ENCODE measurements at regions of chr15 and their contacts with region 1.

Region 1: DNA sequence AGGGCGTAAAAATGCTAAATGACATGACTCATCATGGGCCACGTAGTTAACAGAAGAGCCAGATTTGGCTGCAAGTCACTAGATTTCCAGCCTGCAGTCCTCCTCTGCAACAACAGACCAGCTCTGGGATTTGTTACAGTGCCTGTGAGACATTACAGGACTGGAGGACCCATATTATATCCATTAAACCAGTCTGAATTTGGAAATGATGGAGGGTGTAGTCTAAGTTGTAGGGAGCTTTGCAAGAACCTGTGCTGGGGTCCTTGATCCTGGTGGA is 10.8 kb downstream of the ZNF774 start:
- DNase-seq: peak; percentile 67
- H3K4me3 Mint-ChIP-seq: peak overlapping the region; percentile 57
- H3K27ac Mint-ChIP-seq: peak overlapping the region; percentile 90
- H3K4me1 Mint-ChIP-seq: peaks cover 38% of the 10 kb centered on the region
- H3K27me3 Mint-ChIP-seq: no peaks in the 10 kb centered on the region
- CTCF ChIP-seq: no peak

Region 2: DNA sequence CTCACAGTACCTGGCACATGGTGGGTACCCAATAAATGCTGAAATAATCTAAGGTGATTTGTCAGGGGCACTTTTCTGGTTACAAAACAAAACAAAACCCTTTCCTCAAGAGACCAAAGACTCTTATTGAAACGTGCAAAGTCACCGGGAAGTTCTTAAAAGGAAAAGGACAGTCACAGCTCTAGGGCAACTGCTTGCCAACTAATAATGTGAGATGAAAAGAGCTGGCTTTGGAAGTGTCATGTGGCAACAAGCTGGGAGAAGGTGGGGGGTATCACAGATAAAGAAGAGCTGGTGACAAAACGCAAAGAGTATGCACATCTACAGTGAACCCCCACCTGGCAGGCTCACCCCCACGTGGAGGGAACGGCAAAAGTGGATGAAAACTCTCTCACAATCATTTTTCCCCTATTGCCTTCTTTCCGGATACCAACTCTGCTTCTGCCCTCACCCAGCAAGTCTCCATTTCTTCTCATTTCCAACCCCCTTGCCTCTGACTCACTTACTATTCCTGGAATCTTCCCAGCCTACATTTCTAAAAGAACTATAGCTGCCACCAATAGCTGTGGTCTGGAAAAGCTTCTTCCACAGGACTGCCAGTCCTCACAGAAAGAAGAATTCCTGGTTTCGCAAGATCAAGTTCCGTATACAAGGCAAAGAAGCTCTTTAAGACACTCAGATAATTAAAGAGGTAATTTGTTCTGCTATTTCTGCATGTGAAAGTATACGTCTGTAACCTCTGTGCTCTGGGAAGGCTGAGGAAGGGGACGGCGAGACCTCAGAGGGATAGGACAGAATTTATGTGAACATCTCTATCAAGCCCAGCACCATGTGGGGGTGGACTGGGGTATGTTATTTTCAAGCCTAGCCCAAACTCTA is 526.4 kb before region 1 on chr15:
- CTCF ChIA-PET with region 1: no interaction called
- POLR2A ChIA-PET with region 1: no interaction called
- intact Hi-C with region 1: no loop called
- DNase-seq: peak; percentile 94
- H3K4me3 Mint-ChIP-seq: peak overlapping the region; percentile 63
- H3K27ac Mint-ChIP-seq: peak overlapping the region; percentile 98
- H3K4me1 Mint-ChIP-seq: peaks cover 35% of the 10 kb centered on the region
- H3K27me3 Mint-ChIP-seq: no peaks in the 10 kb centered on the region
- CTCF ChIP-seq: no peak

Region 3: DNA sequence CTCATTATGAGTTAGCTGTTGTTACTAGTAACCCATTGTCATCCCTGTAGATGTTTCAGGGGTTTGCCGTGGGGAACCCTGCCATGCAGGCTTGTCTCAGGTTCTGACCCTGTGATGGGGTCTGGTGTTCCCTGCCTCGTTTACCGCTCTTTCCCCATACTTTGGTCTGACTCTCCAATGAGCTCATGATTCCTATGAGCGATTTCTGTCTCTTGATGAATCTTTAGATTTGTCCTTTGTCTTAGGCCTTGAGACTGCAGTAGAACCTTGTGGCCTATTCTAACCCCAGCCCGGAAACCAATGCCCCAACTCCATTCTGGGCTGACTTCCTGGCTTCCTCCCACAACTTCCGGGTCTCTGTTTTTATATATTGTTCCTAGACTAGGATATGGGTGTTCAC is 13.9 kb after region 1 on chr15:
- CTCF ChIA-PET with region 1: interaction called, 3 read pairs
- POLR2A ChIA-PET with region 1: interaction called, 11 read pairs
- intact Hi-C with region 1: no loop called
- DNase-seq: no peak
- H3K4me3 Mint-ChIP-seq: no peak overlapping the region
- H3K27ac Mint-ChIP-seq: no peak overlapping the region
- H3K4me1 Mint-ChIP-seq: no peaks in the 10 kb centered on the region
- H3K27me3 Mint-ChIP-seq: no peaks in the 10 kb centered on the region
- CTCF ChIP-seq: no peak

Region 4: DNA sequence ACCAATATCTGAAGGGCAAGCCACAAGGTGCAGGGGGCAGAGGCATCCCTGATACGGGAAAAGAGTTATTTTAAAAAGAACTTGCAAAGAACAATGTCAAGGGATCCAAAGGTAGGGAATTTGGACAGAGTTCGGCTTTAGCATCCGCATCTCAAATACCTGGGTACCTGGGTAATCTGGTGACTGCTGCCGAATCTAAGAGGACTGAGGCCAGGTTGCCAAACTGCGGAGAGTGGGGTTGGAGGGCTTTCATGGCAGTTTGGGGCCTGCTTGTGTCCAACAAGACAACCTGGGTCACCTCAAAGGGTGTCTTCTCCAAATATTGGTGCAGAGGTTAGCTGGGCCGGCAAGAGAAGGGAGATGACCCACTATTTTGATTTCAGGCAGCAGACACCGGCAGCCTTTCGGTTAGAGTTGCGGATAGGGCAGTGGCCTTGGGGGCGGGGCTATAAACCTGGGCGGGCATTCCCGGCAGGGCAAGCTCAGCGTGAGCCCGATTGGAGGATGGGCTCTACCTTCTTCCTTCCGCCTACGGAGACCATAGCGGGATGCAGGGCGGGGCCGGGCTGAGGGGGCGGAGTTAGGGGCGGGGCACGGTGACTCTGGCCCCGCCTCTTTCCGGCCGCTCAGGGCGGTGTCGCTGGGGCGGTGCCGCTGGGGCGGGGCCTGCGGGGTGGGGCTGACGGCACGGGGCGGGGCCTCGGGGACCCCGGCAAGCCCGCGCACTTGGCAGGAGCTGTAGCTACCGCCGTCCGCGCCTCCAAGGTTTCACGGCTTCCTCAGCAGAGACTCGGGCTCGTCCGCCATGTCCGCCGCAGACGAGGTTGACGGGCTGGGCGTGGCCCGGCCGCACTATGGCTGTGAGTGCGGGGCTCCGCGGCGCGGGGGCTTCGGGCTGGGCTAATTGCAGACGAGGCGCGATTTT is 24.9 kb after region 1 on chr15 and contains the start of gene IQGAP1:
- CTCF ChIA-PET with region 1: interaction called, 4 read pairs
- POLR2A ChIA-PET with region 1: interaction called, 84 read pairs
- intact Hi-C with region 1: loop called (anchors 1 kb)
- DNase-seq: peak; percentile 96
- H3K4me3 Mint-ChIP-seq: peak within 1 kb of the TSS; percentile 96
- H3K27ac Mint-ChIP-seq: peak within 1 kb of the TSS; percentile 96
- H3K4me1 Mint-ChIP-seq: peaks cover 43% of the 10 kb centered on the region
- H3K27me3 Mint-ChIP-seq: no peaks in the 10 kb centered on the region
- CTCF ChIP-seq: no peak
- total RNA-seq, gene IQGAP1: 264 and 284 TPM in 2 replicates

Region 5: GRCh38 chr15:90412356-90413194 is 49.7 kb after region 1 on chr15:
- CTCF ChIA-PET with region 1: interaction called, 3 read pairs
- POLR2A ChIA-PET with region 1: interaction called, 10 read pairs
- intact Hi-C with region 1: loop called (anchors 2 kb)
- DNase-seq: peak; percentile 46
- H3K4me3 Mint-ChIP-seq: peak overlapping the region; percentile 8
- H3K27ac Mint-ChIP-seq: peak overlapping the region; percentile 65
- H3K4me1 Mint-ChIP-seq: peaks cover 57% of the 10 kb centered on the region
- H3K27me3 Mint-ChIP-seq: no peaks in the 10 kb centered on the region
- CTCF ChIP-seq: no peak

Region 6: DNA sequence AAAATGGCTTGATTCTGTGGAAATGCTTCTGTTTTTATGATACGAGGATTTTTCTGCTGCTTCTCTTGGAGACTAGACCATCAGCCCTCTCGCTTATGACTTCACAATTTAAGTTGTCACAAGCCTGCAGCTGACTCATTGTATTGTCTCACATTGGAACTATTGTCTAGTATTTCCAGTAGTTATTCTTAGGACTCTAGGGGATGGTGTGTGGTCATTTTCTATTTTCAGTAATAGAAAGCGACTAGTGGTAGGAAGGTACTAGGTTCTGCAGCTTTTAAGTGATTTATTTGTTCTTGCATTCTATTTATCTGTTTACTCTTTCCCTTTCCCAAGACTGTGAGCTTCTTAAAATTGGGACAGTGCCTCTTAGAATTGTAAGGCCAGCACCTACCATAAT is 100.5 kb after region 1 on chr15:
- CTCF ChIA-PET with region 1: interaction called, 7 read pairs
- POLR2A ChIA-PET with region 1: no interaction called
- intact Hi-C with region 1: loop called (anchors 5 kb)
- DNase-seq: peak; percentile 40
- H3K4me3 Mint-ChIP-seq: no peak overlapping the region
- H3K27ac Mint-ChIP-seq: peak overlapping the region; percentile 5
- H3K4me1 Mint-ChIP-seq: peaks cover 28% of the 10 kb centered on the region
- H3K27me3 Mint-ChIP-seq: no peaks in the 10 kb centered on the region
- CTCF ChIP-seq: no peak